ENCODE measurements at regions of chr4 and their contacts with region 1.

Region 1: GRCh38 chr4:39706334-39706733 is 8.4 kb downstream of the UBE2K start:
- DNase-seq: no peak
- ATAC-seq: peak; percentile 15
- H3K4me3 ChIP-seq: no peak overlapping the region
- H3K27ac ChIP-seq: no peak overlapping the region
- H3K4me1 ChIP-seq: peaks cover 29% of the 10 kb centered on the region
- H3K27me3 ChIP-seq: no peaks in the 10 kb centered on the region
- CTCF ChIP-seq: no peak
- EP300 ChIP-seq: no peak
- POLR2A ChIP-seq: no peak
- RAD21 ChIP-seq: no peak

Region 2: DNA sequence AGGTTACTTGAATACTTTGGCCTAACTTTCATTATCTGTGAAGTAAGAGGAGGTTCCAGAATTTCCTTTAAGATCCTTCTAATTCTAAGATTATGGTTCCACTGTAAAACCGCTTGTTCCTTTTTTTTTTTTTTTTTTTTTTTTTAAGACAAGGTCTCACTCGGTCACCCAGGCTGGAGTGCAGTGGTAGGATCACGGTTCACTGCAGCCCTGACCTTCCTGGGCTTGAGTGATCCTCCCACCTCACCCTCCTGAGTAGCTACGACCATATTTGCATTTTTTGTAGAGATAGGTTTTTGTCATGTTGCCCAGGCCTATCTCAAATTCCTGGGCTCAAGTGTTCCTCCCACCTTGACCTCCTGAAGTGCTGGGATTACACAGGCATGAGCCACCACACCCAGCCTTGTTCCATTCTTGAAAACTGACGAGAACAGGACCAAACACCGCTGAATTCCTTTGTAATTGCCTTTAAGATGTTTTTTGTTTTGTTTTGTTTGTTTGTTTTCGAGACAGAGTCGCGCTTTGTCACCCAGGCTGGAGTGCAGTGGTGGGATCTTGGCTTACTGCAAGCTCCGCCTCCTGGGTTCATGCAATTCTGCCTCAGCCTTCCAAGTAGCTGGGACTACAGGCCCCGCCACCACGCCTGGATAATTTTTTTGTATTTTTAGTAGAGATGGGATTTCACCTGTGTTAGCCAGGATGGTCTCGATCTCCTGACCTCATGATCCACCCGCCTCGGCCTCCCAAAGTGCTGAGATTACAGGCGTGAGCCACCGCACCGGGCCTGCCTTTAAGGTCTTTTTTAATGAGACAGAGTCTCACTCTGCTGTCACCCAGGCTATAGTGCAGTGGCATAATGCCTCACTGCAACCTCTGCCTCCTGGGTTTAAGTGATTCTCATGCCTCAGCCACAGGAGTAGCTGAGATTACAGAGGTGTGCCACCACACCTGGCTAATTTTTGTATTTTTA is 264.6 kb after region 1 on chr4:
- CTCF ChIA-PET with region 1: no interaction called
- POLR2A ChIA-PET with region 1: interaction called, 5 read pairs
- RAD21 ChIA-PET with region 1: interaction called, 5 read pairs
- SMC1A ChIA-PET with region 1: interaction called, 3 read pairs
- in situ Hi-C with region 1: loop called (anchors 5 kb)
- intact Hi-C with region 1: no loop called
- DNase-seq: no peak
- ATAC-seq: peak; percentile 87
- H3K4me3 ChIP-seq: peak overlapping the region; percentile 48; the same call in 1 of the 2 replicates
- H3K27ac ChIP-seq: peak overlapping the region; percentile 41
- H3K4me1 ChIP-seq: peaks cover 14% of the 10 kb centered on the region
- H3K27me3 ChIP-seq: no peaks in the 10 kb centered on the region
- CTCF ChIP-seq: no peak
- EP300 ChIP-seq: no peak
- POLR2A ChIP-seq: no peak
- RAD21 ChIP-seq: no peak